K562 (cell line): ENCODE measurements at regions of chr9 and their contacts with region 1.

Region 1: DNA sequence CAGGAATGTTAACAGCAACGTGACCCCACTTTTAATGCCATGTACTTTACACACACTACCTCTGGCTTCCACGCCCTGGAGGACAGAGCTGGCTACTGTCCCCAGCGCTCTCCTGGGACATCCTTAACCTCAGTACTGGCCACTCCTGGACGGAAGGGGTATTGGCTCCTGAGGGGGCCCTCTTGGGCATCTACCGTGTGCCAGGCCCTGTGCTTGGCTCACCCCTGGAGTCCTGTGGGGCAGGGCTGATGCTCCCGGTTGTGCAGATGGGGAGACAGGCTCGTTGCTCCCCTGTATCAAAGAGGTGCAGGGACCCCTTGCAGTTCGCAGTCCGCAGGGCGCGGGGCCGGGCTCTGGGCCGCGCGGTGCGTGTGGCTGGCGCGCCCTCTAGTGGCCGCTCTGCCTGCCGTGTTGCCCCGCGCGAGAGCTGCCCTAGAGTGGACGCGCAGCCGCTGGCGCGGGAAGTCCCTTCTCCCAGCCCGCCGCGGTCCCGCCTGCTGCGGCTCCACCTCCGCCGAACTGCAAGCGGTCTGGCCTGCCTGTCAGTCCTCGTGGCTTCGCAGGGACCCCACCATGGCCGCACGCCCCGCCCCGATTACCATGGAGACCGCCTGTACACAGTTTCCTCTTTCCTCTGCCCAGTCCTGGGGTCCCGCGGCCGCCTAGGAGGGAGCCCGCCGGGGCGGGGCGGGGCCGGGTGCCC is at the start of gene WDR38:
- DNase-seq: peak; percentile 83 to 92 (median 86)
- ATAC-seq: peak; percentile 90
- H3K4me3 ChIP-seq: peak within 1 kb of the TSS; percentile 36
- H3K27ac ChIP-seq: no peak within 1 kb of the TSS
- H3K4me1 ChIP-seq: peaks cover 0 to 46% of the 10 kb centered on the region in 2 experiments; a peak in 3 of 5 replicates
- H3K27me3 ChIP-seq: no peaks in the 10 kb centered on the region
- CTCF ChIP-seq: peak; percentile 77 to 98 (median 93)
- EP300 ChIP-seq: no peak
- POLR2A ChIP-seq: no peak
- RAD21 ChIP-seq: peak; percentile 99 to 100
- polyA plus RNA-seq, gene WDR38: not detected

Region 2: DNA sequence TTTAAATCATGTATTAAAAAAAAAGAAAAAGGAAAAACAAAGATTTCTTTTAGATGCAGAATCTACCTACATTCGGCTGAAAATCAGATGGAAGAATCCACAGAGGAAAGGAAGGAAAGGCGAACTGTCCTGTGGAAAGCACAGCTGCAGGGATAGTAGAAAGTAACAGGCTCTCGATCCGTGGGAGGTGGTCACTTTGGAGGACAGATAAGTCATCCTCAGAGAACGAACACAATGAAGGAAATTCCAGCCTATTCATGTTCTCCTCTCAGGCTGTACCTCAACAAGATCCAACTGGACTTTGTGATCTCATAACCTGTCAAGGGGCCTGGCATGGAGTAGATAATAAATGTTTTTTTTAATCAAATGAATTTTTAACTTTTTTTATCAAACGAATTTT is 154.7 kb before region 1 on chr9:
- CTCF ChIA-PET with region 1: no interaction called
- POLR2A ChIA-PET with region 1: no interaction called
- in situ Hi-C with region 1: no loop called
- intact Hi-C with region 1: no loop called
- DNase-seq: peak in 2 of 4 experiments; percentile 40 to 63
- ATAC-seq: peak; percentile 83
- H3K4me3 ChIP-seq: no peak overlapping the region
- H3K27ac ChIP-seq: peak overlapping the region; percentile 4; the same call in 1 of the 3 replicates
- H3K4me1 ChIP-seq: peaks cover 7 to 14% of the 10 kb centered on the region in 2 experiments; a peak in 4 of 5 replicates
- H3K27me3 ChIP-seq: no peaks in the 10 kb centered on the region
- CTCF ChIP-seq: no peak
- EP300 ChIP-seq: no peak
- POLR2A ChIP-seq: no peak
- RAD21 ChIP-seq: no peak

Region 3: DNA sequence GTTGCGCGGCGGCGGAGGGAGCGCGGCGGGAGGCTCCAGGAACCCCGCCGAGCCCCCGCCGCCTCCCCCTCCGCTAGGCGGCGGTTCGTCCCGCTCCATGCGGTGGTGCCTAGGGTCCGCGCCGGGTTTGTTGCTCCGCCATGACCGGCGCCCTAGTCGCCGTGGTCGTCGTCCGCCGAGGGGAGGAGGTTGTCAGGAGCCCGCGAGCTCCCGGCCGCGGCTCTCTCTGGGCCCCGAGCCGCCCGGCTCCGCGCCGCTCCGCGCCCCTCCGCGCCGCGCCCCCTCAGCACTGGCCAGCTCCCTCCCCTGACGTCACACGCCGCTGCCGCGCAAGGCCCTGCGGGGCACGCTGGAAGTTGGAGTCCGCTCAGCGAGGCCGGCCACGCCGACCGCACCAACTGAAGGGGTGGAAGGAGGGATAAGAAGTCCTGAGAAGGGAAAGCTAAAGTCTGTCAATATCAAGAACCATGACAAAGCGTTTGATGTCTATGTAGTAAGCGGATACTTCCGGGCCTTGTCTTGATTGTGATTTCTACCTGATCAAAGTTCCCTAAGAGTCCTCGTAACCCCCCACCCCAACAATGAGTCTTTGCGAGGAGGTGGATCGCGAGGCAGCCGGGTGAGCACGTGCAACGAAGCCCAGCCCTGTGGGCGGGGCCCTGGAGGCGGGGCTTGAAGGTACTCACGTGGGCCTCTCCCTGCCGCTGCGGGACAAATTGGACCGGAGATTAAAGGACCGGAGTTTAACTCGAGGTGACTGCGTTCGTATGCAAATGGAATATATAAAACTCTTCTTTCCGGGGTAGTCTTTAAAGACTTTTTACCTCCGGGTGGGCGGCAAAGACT is 81.7 kb before region 1 on chr9 and contains the start of gene NR6A1:
- CTCF ChIA-PET with region 1: interaction called, 209 read pairs
- POLR2A ChIA-PET with region 1: interaction called, 64 read pairs
- in situ Hi-C with region 1: loop called (anchors 5 kb)
- intact Hi-C with region 1: loop called (anchors 1 kb)
- DNase-seq: peak; percentile 95 to 98 (median 96)
- ATAC-seq: peak; percentile 86
- H3K4me3 ChIP-seq: peak within 1 kb of the TSS; percentile 48
- H3K27ac ChIP-seq: peak within 1 kb of the TSS; percentile 93
- H3K4me1 ChIP-seq: peaks cover 11 to 14% of the 10 kb centered on the region in 2 experiments
- H3K27me3 ChIP-seq: no peaks in the 10 kb centered on the region
- CTCF ChIP-seq: peak; percentile 16 to 33 (median 22); a peak in 3 of 6 replicates
- EP300 ChIP-seq: 0 out of 2 replicates have a peak, but pooled peaks have one; percentile 3
- POLR2A ChIP-seq: peak; percentile 60
- RAD21 ChIP-seq: no peak
- polyA plus RNA-seq, gene NR6A1: 9.7 to 17.7 TPM

Region 4: GRCh38 chr9:124779362-124780059 is 73.5 kb before region 1 on chr9:
- CTCF ChIA-PET with region 1: interaction called, 209 read pairs
- POLR2A ChIA-PET with region 1: interaction called, 64 read pairs
- in situ Hi-C with region 1: loop called (anchors 5 kb)
- intact Hi-C with region 1: loop called (anchors 1 kb)
- DNase-seq: no peak
- ATAC-seq: peak; percentile 39; the same call in 2 of the 3 replicates
- H3K4me3 ChIP-seq: no peak overlapping the region
- H3K27ac ChIP-seq: no peak overlapping the region
- H3K4me1 ChIP-seq: peaks cover 0 to 18% of the 10 kb centered on the region in 2 experiments; a peak in 3 of 5 replicates
- H3K27me3 ChIP-seq: 0 out of 5 replicates have a peak, but pooled peaks cover 0 to 4% of the 10 kb centered on the region in 2 experiments
- CTCF ChIP-seq: no peak
- EP300 ChIP-seq: no peak
- POLR2A ChIP-seq: no peak
- RAD21 ChIP-seq: no peak

Region 5: GRCh38 chr9:124794902-124795491 is 58.0 kb before region 1 on chr9:
- CTCF ChIA-PET with region 1: interaction called, 25 read pairs
- POLR2A ChIA-PET with region 1: interaction called, 6 read pairs
- in situ Hi-C with region 1: loop called (anchors 10 kb)
- intact Hi-C with region 1: loop called (anchors 1 kb)
- DNase-seq: peak; percentile 58 to 78 (median 74)
- ATAC-seq: peak; percentile 98
- H3K4me3 ChIP-seq: no peak overlapping the region
- H3K27ac ChIP-seq: no peak overlapping the region
- H3K4me1 ChIP-seq: peaks cover 2 to 20% of the 10 kb centered on the region in 2 experiments; a peak in 2 of 5 replicates
- H3K27me3 ChIP-seq: peaks cover 0 to 17% of the 10 kb centered on the region in 2 experiments; a peak in 2 of 5 replicates
- CTCF ChIP-seq: peak; percentile 58 to 90 (median 62)
- EP300 ChIP-seq: no peak
- POLR2A ChIP-seq: no peak
- RAD21 ChIP-seq: peak in 1 of 2 experiments; percentile 78; a peak in 3 of 4 replicates

Region 6: GRCh38 chr9:124894741-124895170 is 41.8 kb after region 1 on chr9:
- CTCF ChIA-PET with region 1: no interaction called
- POLR2A ChIA-PET with region 1: no interaction called
- in situ Hi-C with region 1: no loop called
- intact Hi-C with region 1: loop called (anchors 5 kb)
- DNase-seq: peak in 1 of 4 experiments; percentile 45
- ATAC-seq: peak; percentile 79
- H3K4me3 ChIP-seq: no peak overlapping the region
- H3K27ac ChIP-seq: no peak overlapping the region
- H3K4me1 ChIP-seq: peaks cover 8 to 11% of the 10 kb centered on the region in 2 experiments; a peak in 4 of 5 replicates
- H3K27me3 ChIP-seq: no peaks in the 10 kb centered on the region
- CTCF ChIP-seq: peak; percentile 52 to 67 (median 53); a peak in 5 of 6 replicates
- EP300 ChIP-seq: no peak
- POLR2A ChIP-seq: no peak
- RAD21 ChIP-seq: peak; percentile 43 to 58; a peak in 3 of 4 replicates

Region 7: DNA sequence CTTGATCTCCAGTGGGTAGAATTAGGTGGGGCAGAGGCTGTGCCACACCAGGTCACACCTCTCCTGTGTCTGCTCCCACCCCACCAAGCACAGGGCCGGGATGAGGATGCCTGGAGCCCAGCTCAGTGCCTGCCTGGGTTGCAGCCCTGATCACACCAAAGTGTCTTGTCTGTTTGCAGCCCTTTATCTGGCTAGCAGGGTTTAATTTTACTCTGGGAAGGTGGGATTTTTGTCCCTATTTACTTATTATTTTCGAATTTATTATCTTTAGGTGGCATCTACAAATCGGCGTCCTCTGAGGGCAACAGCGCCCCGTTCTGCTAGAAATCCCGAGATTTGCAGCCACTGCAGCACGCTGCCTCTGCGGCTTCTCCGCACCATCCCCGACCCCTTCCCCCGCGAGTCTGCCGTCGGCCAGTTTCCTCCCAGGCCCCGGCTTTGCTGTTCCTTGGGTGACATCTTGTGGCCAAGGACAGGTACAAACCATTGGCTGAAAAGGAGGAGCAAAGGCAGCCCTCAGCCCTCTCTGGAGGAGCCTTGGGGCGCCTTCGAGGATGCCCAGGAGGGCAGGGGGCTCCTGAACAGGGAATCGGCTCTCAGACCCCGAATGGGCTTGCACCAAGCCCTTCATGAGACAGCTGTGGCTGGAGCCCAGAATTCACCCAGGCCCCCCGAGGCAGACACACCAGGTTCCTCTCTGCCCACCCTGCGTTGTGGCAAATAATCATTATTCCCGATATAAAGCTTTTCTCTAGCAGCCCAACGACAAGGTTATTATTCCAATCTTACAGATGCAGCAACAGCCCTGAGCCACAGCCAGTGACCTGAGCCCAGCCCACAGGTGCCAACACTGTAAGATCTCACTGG is 521.7 kb after region 1 on chr9:
- CTCF ChIA-PET with region 1: no interaction called
- POLR2A ChIA-PET with region 1: interaction called, 3 read pairs
- in situ Hi-C with region 1: loop called (anchors 5 kb)
- intact Hi-C with region 1: loop called (anchors 5 kb)
- DNase-seq: peak; percentile 79 to 82 (median 81)
- ATAC-seq: peak; percentile 95
- H3K4me3 ChIP-seq: peak overlapping the region; percentile 12; the same call in 1 of the 2 replicates
- H3K27ac ChIP-seq: no peak overlapping the region
- H3K4me1 ChIP-seq: peaks cover 8 to 19% of the 10 kb centered on the region in 2 experiments; a peak in 4 of 5 replicates
- H3K27me3 ChIP-seq: no peaks in the 10 kb centered on the region
- CTCF ChIP-seq: peak; percentile 81 to 89 (median 88)
- EP300 ChIP-seq: no peak
- POLR2A ChIP-seq: no peak
- RAD21 ChIP-seq: peak; percentile 91 to 93